B cell (primary cell): ENCODE measurements at regions of chr12 and their contacts with region 1.

Region 1: DNA sequence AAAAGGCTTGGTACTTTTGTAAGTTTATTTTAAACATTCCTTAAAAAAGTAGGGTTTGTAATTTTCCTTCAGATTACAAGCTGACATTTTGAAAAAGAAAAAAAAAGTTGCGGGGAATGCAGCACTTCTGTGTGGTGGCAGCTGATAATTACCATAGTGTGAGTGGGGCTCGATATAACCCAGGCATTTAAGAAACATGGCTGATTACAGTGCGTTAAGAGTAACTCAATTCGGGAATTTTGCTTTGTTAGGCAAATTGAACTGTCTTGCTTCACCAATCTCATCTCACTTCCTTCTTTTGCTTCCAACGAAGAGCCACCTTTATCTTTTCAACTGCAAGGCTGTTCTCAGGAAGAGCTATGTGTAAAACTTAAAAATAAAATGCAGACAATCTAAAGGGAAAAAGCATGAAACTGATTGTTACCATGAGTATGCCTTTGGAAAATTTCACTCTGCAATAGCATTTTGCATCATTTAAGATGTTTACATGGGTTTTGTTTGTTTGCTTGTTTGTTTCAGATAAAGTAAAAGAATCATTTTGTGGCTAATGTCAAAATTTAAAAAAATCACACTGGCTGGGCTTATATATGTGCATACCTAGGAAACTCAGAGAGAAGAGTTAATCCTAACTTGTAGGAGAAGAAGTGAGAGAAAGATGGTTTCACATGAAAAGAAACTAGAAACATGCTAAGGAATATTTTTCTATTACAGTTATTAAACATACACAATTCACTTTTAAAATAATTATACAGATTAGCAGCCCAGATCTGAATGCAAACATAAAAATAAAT is 295.8 kb upstream of the ATP2B1 start:
- DNase-seq: peak; percentile 38
- ATAC-seq: no peak
- H3K4me3 ChIP-seq: peak overlapping the region in 1 of 5 experiments; percentile 13
- H3K4me3 Mint-ChIP-seq: peak overlapping the region; percentile 35
- H3K27ac ChIP-seq: no peak overlapping the region
- H3K27ac Mint-ChIP-seq: peak overlapping the region; percentile 2
- H3K4me1 ChIP-seq: peaks cover 6 to 13% of the 10 kb centered on the region in 2 donors
- H3K4me1 Mint-ChIP-seq: peaks cover 21% of the 10 kb centered on the region
- H3K27me3 ChIP-seq: no peaks in the 10 kb centered on the region
- H3K27me3 Mint-ChIP-seq: no peaks in the 10 kb centered on the region
- CTCF ChIP-seq: no peak

Region 2: GRCh38 chr12:89960011-89960507 is 44.4 kb before region 1 on chr12:
- CTCF ChIA-PET with region 1: no interaction called
- POLR2A ChIA-PET with region 1: no interaction called
- intact Hi-C with region 1: loop called (anchors 5 kb)
- DNase-seq: peak; percentile 66
- ATAC-seq: peak; percentile 86
- H3K4me3 ChIP-seq: no peak overlapping the region
- H3K4me3 Mint-ChIP-seq: peak overlapping the region; percentile 69
- H3K27ac ChIP-seq: no peak overlapping the region
- H3K27ac Mint-ChIP-seq: peak overlapping the region; percentile 77
- H3K4me1 ChIP-seq: peaks cover 16 to 18% of the 10 kb centered on the region in 2 donors
- H3K4me1 Mint-ChIP-seq: peaks cover 34% of the 10 kb centered on the region
- H3K27me3 ChIP-seq: no peaks in the 10 kb centered on the region
- H3K27me3 Mint-ChIP-seq: no peaks in the 10 kb centered on the region
- CTCF ChIP-seq: no peak

Region 3: DNA sequence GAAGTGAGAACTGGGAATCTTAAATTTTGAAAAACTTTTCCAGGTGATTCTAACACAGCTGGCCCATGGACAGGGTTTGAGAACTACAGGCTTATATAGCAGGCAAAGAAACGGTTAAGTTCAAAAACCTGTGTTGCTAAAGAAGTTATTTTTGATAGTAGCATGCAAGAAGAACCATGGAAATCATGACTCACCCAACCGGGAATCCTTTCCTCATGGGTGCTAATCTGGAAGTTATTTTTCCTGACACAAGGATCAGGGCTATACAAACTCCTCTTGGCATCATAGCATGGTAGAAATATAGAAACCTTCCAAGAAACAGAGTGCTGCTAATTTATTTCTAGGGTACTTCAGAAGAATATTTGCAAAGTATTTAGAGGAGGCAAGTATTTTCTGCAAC is 361.8 kb after region 1 on chr12:
- CTCF ChIA-PET with region 1: no interaction called
- POLR2A ChIA-PET with region 1: no interaction called
- intact Hi-C with region 1: no loop called
- DNase-seq: no peak
- ATAC-seq: no peak
- H3K4me3 ChIP-seq: no peak overlapping the region
- H3K4me3 Mint-ChIP-seq: no peak overlapping the region
- H3K27ac ChIP-seq: no peak overlapping the region
- H3K27ac Mint-ChIP-seq: no peak overlapping the region
- H3K4me1 ChIP-seq: no peaks in the 10 kb centered on the region
- H3K4me1 Mint-ChIP-seq: no peaks in the 10 kb centered on the region
- H3K27me3 ChIP-seq: no peaks in the 10 kb centered on the region
- H3K27me3 Mint-ChIP-seq: no peaks in the 10 kb centered on the region
- CTCF ChIP-seq: no peak